Transverse colon (tissue), 4 donors: ENCODE measurements at regions of chr18 and their contacts with region 1.

Region 1: DNA sequence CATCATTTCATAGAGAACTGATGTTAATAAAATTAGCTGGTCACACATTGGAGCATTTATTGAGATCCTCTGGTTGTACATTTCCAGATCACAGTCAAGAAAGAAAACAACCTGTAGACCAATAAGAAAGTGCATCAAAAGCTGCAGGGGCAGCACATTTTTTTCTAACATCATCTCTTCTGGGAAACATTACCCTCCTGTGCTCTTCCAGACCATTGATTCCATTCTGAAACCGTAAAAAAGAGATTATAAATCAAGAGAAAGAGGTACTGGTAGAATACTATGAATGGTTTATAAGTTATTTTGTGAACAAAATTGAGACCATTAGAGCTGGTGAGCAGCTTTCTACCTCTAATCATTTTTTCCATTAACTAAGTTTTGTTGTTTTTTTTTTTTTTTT is 1548.2 kb upstream of the CELF4 start:
- DNase-seq: no peak
- H3K4me3 ChIP-seq: no peak overlapping the region
- H3K27ac ChIP-seq: no peak overlapping the region
- H3K4me1 ChIP-seq: no peaks in the 10 kb centered on the region
- H3K27me3 ChIP-seq: no peaks in the 10 kb centered on the region
- CTCF ChIP-seq: no peak
- EP300 ChIP-seq: no peak
- POLR2A ChIP-seq: no peak

Region 2: GRCh38 chr18:38984968-38985367 is 128.8 kb before region 1 on chr18:
- in situ Hi-C with region 1: no loop called
- intact Hi-C with region 1: no loop called
- DNase-seq: no peak
- H3K4me3 ChIP-seq: no peak overlapping the region
- H3K27ac ChIP-seq: no peak overlapping the region
- H3K4me1 ChIP-seq: no peaks in the 10 kb centered on the region
- H3K27me3 ChIP-seq: no peaks in the 10 kb centered on the region
- CTCF ChIP-seq: no peak
- EP300 ChIP-seq: no peak
- POLR2A ChIP-seq: no peak

Region 3: GRCh38 chr18:39057423-39058057 is 56.2 kb before region 1 on chr18:
- in situ Hi-C with region 1: no loop called
- intact Hi-C with region 1: no loop called
- DNase-seq: no peak
- H3K4me3 ChIP-seq: no peak overlapping the region
- H3K27ac ChIP-seq: no peak overlapping the region
- H3K4me1 ChIP-seq: no peaks in the 10 kb centered on the region
- H3K27me3 ChIP-seq: no peaks in the 10 kb centered on the region
- CTCF ChIP-seq: no peak
- EP300 ChIP-seq: no peak
- POLR2A ChIP-seq: no peak

Region 4: GRCh38 chr18:39072970-39073369 is 40.8 kb before region 1 on chr18:
- in situ Hi-C with region 1: no loop called
- intact Hi-C with region 1: loop called (anchors 2 kb)
- DNase-seq: no peak
- H3K4me3 ChIP-seq: no peak overlapping the region
- H3K27ac ChIP-seq: no peak overlapping the region
- H3K4me1 ChIP-seq: no peaks in the 10 kb centered on the region
- H3K27me3 ChIP-seq: no peaks in the 10 kb centered on the region
- CTCF ChIP-seq: no peak
- EP300 ChIP-seq: no peak
- POLR2A ChIP-seq: no peak

Region 5: GRCh38 chr18:39909706-39910105 is 795.9 kb after region 1 on chr18:
- in situ Hi-C with region 1: no loop called
- intact Hi-C with region 1: no loop called
- DNase-seq: no peak
- H3K4me3 ChIP-seq: no peak overlapping the region
- H3K27ac ChIP-seq: no peak overlapping the region
- H3K4me1 ChIP-seq: no peaks in the 10 kb centered on the region
- H3K27me3 ChIP-seq: no peaks in the 10 kb centered on the region
- CTCF ChIP-seq: no peak
- EP300 ChIP-seq: no peak
- POLR2A ChIP-seq: no peak